Ascending aorta (tissue), 2 donors: ENCODE measurements at regions of chr9 and their contacts with region 1.

Region 1: GRCh38 chr9:134738869-134739659 is 97.5 kb downstream of the COL5A1 start:
- DNase-seq: peak in 1 of 2 donors; percentile 79
- H3K4me3 ChIP-seq: no peak overlapping the region
- H3K27ac ChIP-seq: peak overlapping the region in 1 of 2 donors; percentile 31
- H3K4me1 ChIP-seq: no peaks in the 10 kb centered on the region
- H3K27me3 ChIP-seq: no peaks in the 10 kb centered on the region
- CTCF ChIP-seq: peak; percentile 89 to 93 (median 90)

Region 2: GRCh38 chr9:134171316-134172197 is 567.5 kb before region 1 on chr9:
- intact Hi-C with region 1: loop called (anchors 5 kb)
- DNase-seq: no peak
- H3K4me3 ChIP-seq: no peak overlapping the region
- H3K27ac ChIP-seq: no peak overlapping the region
- H3K4me1 ChIP-seq: peaks cover 0 to 6% of the 10 kb centered on the region in 2 donors
- H3K27me3 ChIP-seq: peaks cover 7% of the 10 kb centered on the region
- CTCF ChIP-seq: no peak

Region 3: DNA sequence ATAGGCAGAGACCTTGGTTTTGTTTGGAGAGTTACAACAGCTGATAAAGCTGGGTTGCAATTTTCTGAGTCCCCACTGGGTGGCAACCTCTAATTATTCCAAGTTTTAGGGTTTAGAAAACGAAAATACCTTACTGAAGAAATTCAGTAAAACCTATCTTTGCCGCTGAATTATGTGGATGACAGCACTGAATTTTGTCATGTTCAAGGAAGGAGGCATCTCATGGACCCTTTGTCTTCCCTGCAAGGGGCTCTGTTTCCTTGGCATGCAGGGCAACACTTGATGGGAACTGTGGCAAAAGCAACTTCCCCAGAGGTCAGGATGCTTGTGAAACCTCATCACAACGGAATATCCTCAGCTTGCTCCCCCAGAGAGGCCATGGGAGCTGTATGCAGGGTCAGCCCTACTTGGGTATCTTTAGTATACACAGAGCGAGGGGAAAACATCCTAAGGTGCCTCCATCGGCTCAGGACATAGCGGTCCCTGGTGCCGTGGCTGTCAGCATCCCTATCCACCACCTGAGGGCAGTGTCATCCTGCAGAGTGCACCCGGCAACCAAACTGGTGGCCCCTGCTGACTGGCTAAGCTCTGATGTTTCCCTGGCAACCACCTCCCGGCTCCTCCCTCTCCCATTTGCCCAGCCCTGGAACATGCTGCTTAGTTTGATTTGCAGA is 289.7 kb before region 1 on chr9:
- intact Hi-C with region 1: loop called (anchors 1 kb)
- DNase-seq: peak; percentile 67 to 95
- H3K4me3 ChIP-seq: no peak overlapping the region
- H3K27ac ChIP-seq: no peak overlapping the region
- H3K4me1 ChIP-seq: no peaks in the 10 kb centered on the region
- H3K27me3 ChIP-seq: no peaks in the 10 kb centered on the region
- CTCF ChIP-seq: peak; percentile 86 to 94 (median 86)

Region 4: DNA sequence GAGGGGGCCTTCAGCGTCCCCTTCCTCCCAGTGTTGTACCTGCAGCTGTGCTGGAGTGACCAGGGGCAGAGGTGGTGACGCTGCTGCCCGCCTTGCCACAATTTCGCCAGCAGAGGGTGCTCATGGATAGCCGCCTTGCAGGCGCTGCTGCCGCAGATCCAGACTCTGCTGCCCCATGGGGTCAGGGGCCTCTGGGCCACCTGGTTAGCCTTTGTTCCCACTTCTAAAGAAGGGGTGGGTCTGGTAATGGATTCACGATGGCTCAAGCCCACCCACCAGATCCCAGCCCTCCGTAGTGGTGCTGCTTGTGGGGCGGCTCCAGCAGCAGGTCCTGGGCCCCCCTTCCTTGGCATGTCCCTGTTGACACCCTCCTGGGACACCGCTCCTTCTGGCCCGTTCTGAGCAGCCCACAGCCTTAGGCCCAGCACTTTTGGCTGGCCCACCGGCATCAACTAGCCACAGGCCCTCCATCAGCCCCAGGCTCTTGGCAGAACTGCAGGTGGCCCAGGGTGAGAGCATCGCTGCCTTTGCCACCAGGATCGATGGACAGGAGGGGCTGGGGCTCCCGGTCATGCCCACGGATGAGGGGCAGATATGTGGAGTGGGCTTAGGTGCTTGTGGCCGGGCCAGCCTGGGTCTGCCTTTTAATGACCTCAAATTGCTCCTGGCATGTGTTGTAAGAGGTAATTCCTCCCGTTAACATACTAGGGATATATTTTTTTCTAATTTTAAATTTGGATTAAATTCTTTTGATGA is 40.3 kb before region 1 on chr9:
- intact Hi-C with region 1: loop called (anchors 1 kb)
- DNase-seq: no peak
- H3K4me3 ChIP-seq: no peak overlapping the region
- H3K27ac ChIP-seq: no peak overlapping the region
- H3K4me1 ChIP-seq: peaks cover 2 to 8% of the 10 kb centered on the region in 2 donors
- H3K27me3 ChIP-seq: no peaks in the 10 kb centered on the region
- CTCF ChIP-seq: peak; percentile 87 to 95 (median 90)

Region 5: GRCh38 chr9:134814598-134815220 is 75.6 kb after region 1 on chr9:
- intact Hi-C with region 1: no loop called
- DNase-seq: no peak
- H3K4me3 ChIP-seq: no peak overlapping the region
- H3K27ac ChIP-seq: no peak overlapping the region
- H3K4me1 ChIP-seq: no peaks in the 10 kb centered on the region
- H3K27me3 ChIP-seq: no peaks in the 10 kb centered on the region
- CTCF ChIP-seq: no peak